HCT116 (cell line): ENCODE measurements at regions of chr13 and their contacts with region 1.

Region 1: GRCh38 chr13:70723732-70724131 is 615.5 kb upstream of the KLHL1 start:
- DNase-seq: no peak
- ATAC-seq: no peak
- H3K4me3 ChIP-seq: no peak overlapping the region
- H3K27ac ChIP-seq: no peak overlapping the region
- H3K4me1 ChIP-seq: no peaks in the 10 kb centered on the region
- H3K27me3 ChIP-seq: no peaks in the 10 kb centered on the region
- CTCF ChIP-seq: no peak
- POLR2A ChIP-seq: no peak
- RAD21 ChIP-seq: peak; percentile 35; the same call in 1 of the 2 replicates

Region 2: GRCh38 chr13:71218960-71219359 is 495.2 kb after region 1 on chr13:
- CTCF ChIA-PET with region 1: no interaction called
- POLR2A ChIA-PET with region 1: no interaction called
- RAD21 ChIA-PET with region 1: no interaction called
- intact Hi-C with region 1: loop called (anchors 10 kb)
- DNase-seq: no peak
- ATAC-seq: no peak
- H3K4me3 ChIP-seq: no peak overlapping the region
- H3K27ac ChIP-seq: no peak overlapping the region
- H3K4me1 ChIP-seq: no peaks in the 10 kb centered on the region
- H3K27me3 ChIP-seq: no peaks in the 10 kb centered on the region
- CTCF ChIP-seq: peak; percentile 5 to 27 (median 20); a peak in 2 of 6 replicates
- POLR2A ChIP-seq: no peak
- RAD21 ChIP-seq: peak; percentile 40